Naive thymus-derived CD4-positive, alpha-beta T cell (primary cell): ENCODE measurements at regions of chr11 and their contacts with region 1.

Region 1: GRCh38 chr11:118295834-118296454 is 8.6 kb upstream of the CD3E start:
- DNase-seq: peak in 7 of 9 donors; percentile 38 to 60 (median 52)
- ATAC-seq: peak; percentile 74
- H3K4me3 ChIP-seq: no peak overlapping the region
- H3K4me3 Mint-ChIP-seq: no peak overlapping the region
- H3K27ac ChIP-seq: peak overlapping the region; percentile 44
- H3K27ac Mint-ChIP-seq: peak overlapping the region; percentile 39 to 84 (median 61)
- H3K4me1 ChIP-seq: peaks cover 0 to 15% of the 10 kb centered on the region in 2 donors
- H3K4me1 Mint-ChIP-seq: peaks cover 13 to 34% (median 30%) of the 10 kb centered on the region in 7 donors
- H3K27me3 ChIP-seq: no peaks in the 10 kb centered on the region
- H3K27me3 Mint-ChIP-seq: no peaks in the 10 kb centered on the region

Region 2: GRCh38 chr11:118164885-118165284 is 131.1 kb before region 1 on chr11:
- CTCF ChIA-PET with region 1: no interaction called
- POLR2A ChIA-PET with region 1: no interaction called
- intact Hi-C with region 1: no loop called
- DNase-seq: no peak
- ATAC-seq: no peak
- H3K4me3 ChIP-seq: no peak overlapping the region
- H3K4me3 Mint-ChIP-seq: no peak overlapping the region
- H3K27ac ChIP-seq: no peak overlapping the region
- H3K27ac Mint-ChIP-seq: no peak overlapping the region
- H3K4me1 ChIP-seq: no peaks in the 10 kb centered on the region
- H3K4me1 Mint-ChIP-seq: no peaks in the 10 kb centered on the region
- H3K27me3 ChIP-seq: no peaks in the 10 kb centered on the region
- H3K27me3 Mint-ChIP-seq: peaks cover 0 to 32% (median 5%) of the 10 kb centered on the region in 5 donors

Region 3: GRCh38 chr11:118216621-118217481 is 79.1 kb before region 1 on chr11:
- CTCF ChIA-PET with region 1: interaction called, 13 read pairs
- POLR2A ChIA-PET with region 1: interaction called, 4 read pairs
- intact Hi-C with region 1: no loop called
- DNase-seq: peak in 3 of 9 donors; percentile 19 to 60 (median 39)
- ATAC-seq: peak; percentile 71
- H3K4me3 ChIP-seq: peak overlapping the region; percentile 37
- H3K4me3 Mint-ChIP-seq: peak overlapping the region in 9 of 10 donors; percentile 78 to 87 (median 83)
- H3K27ac ChIP-seq: peak overlapping the region; percentile 64
- H3K27ac Mint-ChIP-seq: peak overlapping the region in 7 of 9 donors; percentile 84 to 96 (median 92)
- H3K4me1 ChIP-seq: peaks cover 62 to 89% of the 10 kb centered on the region in 2 donors
- H3K4me1 Mint-ChIP-seq: peaks cover 75 to 100% (median 98%) of the 10 kb centered on the region in 7 donors
- H3K27me3 ChIP-seq: no peaks in the 10 kb centered on the region
- H3K27me3 Mint-ChIP-seq: no peaks in the 10 kb centered on the region

Region 4: GRCh38 chr11:118263695-118264567 is 32.0 kb before region 1 on chr11 and contains the start of gene MPZL2:
- CTCF ChIA-PET with region 1: interaction called, 11 read pairs
- POLR2A ChIA-PET with region 1: no interaction called
- intact Hi-C with region 1: no loop called
- DNase-seq: peak in 8 of 9 donors; percentile 11 to 47 (median 28)
- ATAC-seq: peak; percentile 72
- H3K4me3 ChIP-seq: peak within 1 kb of the TSS; percentile 29
- H3K4me3 Mint-ChIP-seq: peak within 1 kb of the TSS; percentile 78 to 91 (median 88)
- H3K27ac ChIP-seq: peak within 1 kb of the TSS; percentile 55
- H3K27ac Mint-ChIP-seq: peak within 1 kb of the TSS; percentile 30 to 94 (median 75)
- H3K4me1 ChIP-seq: peaks cover 0 to 14% of the 10 kb centered on the region in 2 donors
- H3K4me1 Mint-ChIP-seq: peaks cover 19 to 44% (median 37%) of the 10 kb centered on the region in 7 donors
- H3K27me3 ChIP-seq: no peaks in the 10 kb centered on the region
- H3K27me3 Mint-ChIP-seq: peaks cover 0 to 19% (median 0%) of the 10 kb centered on the region in 5 donors
- total RNA-seq, gene MPZL2: 0.69 to 5.9 (median 1.6) TPM

Region 5: GRCh38 chr11:118311518-118311917 is 15.6 kb after region 1 on chr11:
- CTCF ChIA-PET with region 1: interaction called, 22 read pairs
- POLR2A ChIA-PET with region 1: interaction called, 31 read pairs
- intact Hi-C with region 1: no loop called
- DNase-seq: peak in 2 of 9 donors; percentile 22 to 23
- ATAC-seq: no peak
- H3K4me3 ChIP-seq: no peak overlapping the region
- H3K4me3 Mint-ChIP-seq: peak overlapping the region in 7 of 10 donors; percentile 9 to 95 (median 58)
- H3K27ac ChIP-seq: peak overlapping the region; percentile 52
- H3K27ac Mint-ChIP-seq: peak overlapping the region; percentile 36 to 100 (median 93)
- H3K4me1 ChIP-seq: peaks cover 60 to 88% of the 10 kb centered on the region in 2 donors
- H3K4me1 Mint-ChIP-seq: peaks cover 64 to 97% (median 91%) of the 10 kb centered on the region in 7 donors
- H3K27me3 ChIP-seq: no peaks in the 10 kb centered on the region
- H3K27me3 Mint-ChIP-seq: no peaks in the 10 kb centered on the region

Region 6: DNA sequence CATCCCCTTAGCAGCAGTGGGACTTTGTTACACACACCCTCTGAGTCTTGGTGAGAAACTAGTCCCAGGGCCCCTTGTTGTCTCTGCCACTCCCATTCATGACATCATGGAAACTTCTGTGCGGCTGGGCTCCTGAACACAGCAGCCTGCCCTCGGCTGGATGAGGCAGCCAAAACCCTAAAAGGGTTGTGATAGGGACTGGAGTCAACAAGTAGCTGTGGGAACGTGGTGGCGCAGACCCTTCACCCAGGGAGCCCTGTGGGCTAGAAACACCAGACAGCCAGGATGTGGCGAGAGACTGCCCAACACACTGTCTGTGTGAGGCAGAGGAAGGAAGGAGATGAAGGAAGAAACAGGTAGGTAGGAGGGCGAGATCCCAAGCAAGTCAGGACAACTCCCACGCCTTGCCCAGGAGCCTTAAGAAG is 42.7 kb after region 1 on chr11:
- CTCF ChIA-PET with region 1: interaction called, 74 read pairs
- POLR2A ChIA-PET with region 1: no interaction called
- intact Hi-C with region 1: no loop called
- DNase-seq: peak; percentile 46 to 99 (median 92)
- ATAC-seq: peak; percentile 82
- H3K4me3 ChIP-seq: peak overlapping the region; percentile 88
- H3K4me3 Mint-ChIP-seq: peak overlapping the region; percentile 89 to 98 (median 96)
- H3K27ac ChIP-seq: peak overlapping the region; percentile 96
- H3K27ac Mint-ChIP-seq: peak overlapping the region; percentile 95 to 100 (median 99)
- H3K4me1 ChIP-seq: peaks cover 46 to 50% of the 10 kb centered on the region in 2 donors
- H3K4me1 Mint-ChIP-seq: peaks cover 28 to 68% (median 55%) of the 10 kb centered on the region in 7 donors
- H3K27me3 ChIP-seq: no peaks in the 10 kb centered on the region
- H3K27me3 Mint-ChIP-seq: no peaks in the 10 kb centered on the region

Region 7: DNA sequence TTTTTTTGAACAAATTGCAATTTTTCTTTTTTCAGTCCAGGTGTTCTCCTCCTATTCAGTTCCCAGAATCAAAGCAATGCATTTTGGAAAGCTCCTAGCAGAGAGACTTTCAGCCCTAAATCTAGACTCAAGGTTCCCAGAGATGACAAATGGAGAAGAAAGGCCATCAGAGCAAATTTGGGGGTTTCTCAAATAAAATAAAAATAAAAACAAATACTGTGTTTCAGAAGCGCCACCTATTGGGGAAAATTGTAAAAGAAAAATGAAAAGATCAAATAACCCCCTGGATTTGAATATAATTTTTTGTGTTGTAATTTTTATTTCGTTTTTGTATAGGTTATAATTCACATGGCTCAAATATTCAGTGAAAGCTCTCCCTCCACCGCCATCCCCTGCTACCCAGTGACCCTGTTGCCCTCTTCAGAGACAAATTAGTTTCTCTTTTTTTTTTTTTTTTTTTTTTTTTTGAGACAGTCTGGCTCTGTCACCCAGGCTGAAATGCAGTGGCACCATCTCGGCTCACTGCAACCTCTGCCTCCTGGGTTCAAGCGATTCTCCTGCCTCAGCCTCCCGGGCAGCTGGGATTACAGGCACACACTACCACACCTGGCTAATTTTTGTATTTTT is 57.3 kb after region 1 on chr11:
- CTCF ChIA-PET with region 1: interaction called, 90 read pairs
- POLR2A ChIA-PET with region 1: no interaction called
- intact Hi-C with region 1: loop called (anchors 1 kb)
- DNase-seq: peak in 7 of 9 donors; percentile 21 to 70 (median 61)
- ATAC-seq: peak; percentile 51
- H3K4me3 ChIP-seq: no peak overlapping the region
- H3K4me3 Mint-ChIP-seq: no peak overlapping the region
- H3K27ac ChIP-seq: peak overlapping the region; percentile 62
- H3K27ac Mint-ChIP-seq: peak overlapping the region; percentile 38 to 96 (median 91)
- H3K4me1 ChIP-seq: peaks cover 13 to 15% of the 10 kb centered on the region in 2 donors
- H3K4me1 Mint-ChIP-seq: peaks cover 5 to 53% (median 35%) of the 10 kb centered on the region in 7 donors
- H3K27me3 ChIP-seq: no peaks in the 10 kb centered on the region
- H3K27me3 Mint-ChIP-seq: no peaks in the 10 kb centered on the region

Region 8: DNA sequence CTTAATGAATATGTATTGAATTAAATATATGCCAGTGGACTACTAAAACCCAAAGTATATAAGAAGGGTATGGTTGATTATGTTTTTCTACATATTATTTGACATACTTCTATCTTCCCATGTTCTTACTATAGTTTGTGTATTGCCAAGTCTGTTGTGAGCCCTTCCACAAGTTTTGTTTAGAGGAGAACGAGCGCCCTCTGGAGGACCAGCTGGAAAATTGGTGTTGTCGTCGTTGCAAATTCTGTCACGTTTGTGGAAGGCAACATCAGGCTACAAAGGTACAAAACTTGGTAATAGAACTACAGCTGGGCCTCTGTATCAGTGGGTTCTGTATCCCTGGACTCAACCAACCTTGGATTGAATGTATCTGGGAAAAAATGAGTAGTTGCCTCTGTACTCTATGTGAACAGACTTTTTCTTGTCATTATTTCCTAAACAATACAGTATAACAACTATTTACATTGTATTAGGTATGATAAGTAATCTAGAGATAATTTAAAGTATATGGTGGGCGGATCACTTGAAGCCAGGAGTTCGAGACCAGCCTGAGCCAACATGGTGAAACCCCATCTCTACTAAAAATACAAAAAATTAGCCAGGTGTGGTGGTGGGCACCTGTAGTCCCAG is 192.7 kb after region 1 on chr11:
- CTCF ChIA-PET with region 1: interaction called, 3 read pairs
- POLR2A ChIA-PET with region 1: no interaction called
- intact Hi-C with region 1: loop called in 1 of 2 experiments (anchors 1 kb)
- DNase-seq: peak; percentile 66 to 86 (median 80)
- ATAC-seq: peak; percentile 89
- H3K4me3 ChIP-seq: no peak overlapping the region
- H3K4me3 Mint-ChIP-seq: no peak overlapping the region
- H3K27ac ChIP-seq: peak overlapping the region; percentile 53
- H3K27ac Mint-ChIP-seq: peak overlapping the region in 7 of 9 donors; percentile 10 to 89 (median 57)
- H3K4me1 ChIP-seq: no peaks in the 10 kb centered on the region
- H3K4me1 Mint-ChIP-seq: peaks cover 0 to 12% (median 5%) of the 10 kb centered on the region in 7 donors
- H3K27me3 ChIP-seq: no peaks in the 10 kb centered on the region
- H3K27me3 Mint-ChIP-seq: no peaks in the 10 kb centered on the region